Mammary epithelial cell (primary cell): ENCODE measurements at regions of chr3 and their contacts with region 1.

Region 1: DNA sequence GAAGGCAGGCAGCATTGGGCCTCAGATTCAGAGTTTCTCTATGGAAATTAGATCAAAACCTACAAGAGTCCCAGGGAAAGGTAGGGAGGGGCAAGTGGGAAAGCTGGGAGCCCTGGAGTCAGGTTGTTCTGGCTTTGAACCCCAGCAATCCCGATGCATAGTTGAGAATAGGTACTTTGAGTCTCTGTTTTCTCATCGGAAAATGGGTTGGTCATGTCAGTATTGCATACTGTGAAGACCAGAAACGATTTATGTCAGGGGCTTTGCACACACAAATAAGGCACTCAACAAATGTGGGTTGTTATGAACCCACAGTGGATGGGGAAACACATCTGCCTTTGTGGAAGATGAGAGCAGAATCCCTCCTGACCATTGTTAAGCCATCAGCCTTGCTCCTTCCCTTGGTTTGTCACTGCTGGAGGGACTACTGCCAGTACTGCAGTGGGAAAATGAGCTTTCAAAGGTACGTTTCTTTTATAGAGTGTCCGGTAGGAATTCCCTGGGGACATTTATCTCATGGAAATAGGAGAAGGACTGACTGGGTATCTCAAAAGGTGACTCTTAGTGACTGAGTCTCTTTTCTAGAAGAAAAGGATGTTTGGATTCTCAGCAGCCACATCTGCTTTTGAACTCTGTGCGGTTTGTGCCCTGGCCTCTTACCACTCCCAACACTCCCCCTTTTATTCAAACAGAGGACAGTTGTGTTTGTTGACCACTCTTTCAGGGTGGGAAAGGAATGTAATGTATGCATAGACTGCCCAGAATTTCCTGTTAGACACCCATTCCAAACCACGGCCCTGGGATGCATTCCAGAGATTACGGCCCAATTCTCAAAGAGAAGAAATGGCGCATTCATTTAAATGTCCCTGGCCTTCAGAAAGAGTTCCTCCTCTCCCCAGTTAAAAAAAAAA is 54.6 kb upstream of the VILL start:
- DNase-seq: peak; percentile 79
- H3K4me3 ChIP-seq: no peak overlapping the region
- H3K27ac ChIP-seq: peak overlapping the region; percentile 74
- H3K4me1 ChIP-seq: peaks cover 42% of the 10 kb centered on the region
- H3K27me3 ChIP-seq: no peaks in the 10 kb centered on the region
- CTCF ChIP-seq: no peak

Region 2: GRCh38 chr3:37103103-37103808 is 832.8 kb before region 1 on chr3:
- CTCF ChIA-PET with region 1: no interaction called
- dilution Hi-C with region 1: no loop called
- in situ Hi-C with region 1: no loop called
- intact Hi-C with region 1: no loop called
- DNase-seq: no peak
- H3K4me3 ChIP-seq: no peak overlapping the region
- H3K27ac ChIP-seq: no peak overlapping the region
- H3K4me1 ChIP-seq: no peaks in the 10 kb centered on the region
- H3K27me3 ChIP-seq: no peaks in the 10 kb centered on the region
- CTCF ChIP-seq: no peak

Region 3: DNA sequence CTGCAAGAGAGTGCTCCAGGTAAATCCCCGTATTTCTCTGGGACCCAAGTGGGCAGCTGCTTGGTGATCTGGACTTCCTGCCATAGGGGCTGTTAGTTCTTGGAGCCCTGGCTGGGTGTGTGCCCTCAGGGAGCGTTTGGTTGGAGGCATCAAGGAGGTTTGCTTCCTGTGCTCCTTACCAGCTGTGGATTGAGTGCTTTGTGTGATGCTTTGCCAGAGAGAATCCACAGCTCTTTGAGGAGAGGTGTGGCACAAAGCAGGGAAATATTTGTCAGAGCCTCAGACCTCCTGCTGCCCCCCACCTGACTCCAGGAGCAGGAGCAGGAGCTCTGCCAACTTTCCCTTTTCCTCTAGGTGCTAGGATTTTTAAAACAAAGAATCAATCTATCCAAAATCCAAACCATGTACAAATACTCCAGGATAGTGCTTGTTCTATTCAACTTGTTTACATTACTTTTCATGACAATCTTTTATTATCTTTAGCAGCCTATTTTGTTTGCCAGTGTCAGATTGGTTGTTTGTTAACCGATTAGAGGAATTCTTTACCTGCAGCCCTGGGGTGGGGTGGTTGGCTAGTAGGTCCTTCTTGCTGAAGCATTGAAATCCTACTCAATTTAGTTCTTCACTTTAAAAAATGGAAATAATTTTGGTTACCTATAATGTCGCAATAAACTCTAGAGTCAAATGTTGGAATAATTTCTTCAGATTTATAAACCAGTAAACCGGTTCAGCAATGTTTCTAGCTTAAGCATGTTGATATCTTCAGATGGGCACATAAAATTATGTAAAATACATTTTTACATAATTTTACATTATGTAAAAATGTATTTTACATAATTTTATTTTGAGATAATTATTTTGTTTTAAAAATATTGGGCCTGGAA is 71.8 kb before region 1 on chr3:
- CTCF ChIA-PET with region 1: no interaction called
- dilution Hi-C with region 1: no loop called
- in situ Hi-C with region 1: no loop called
- intact Hi-C with region 1: loop called (anchors 2 kb)
- DNase-seq: peak; percentile 40
- H3K4me3 ChIP-seq: peak overlapping the region; percentile 64 to 82 (median 75)
- H3K27ac ChIP-seq: peak overlapping the region; percentile 41
- H3K4me1 ChIP-seq: peaks cover 41% of the 10 kb centered on the region
- H3K27me3 ChIP-seq: no peaks in the 10 kb centered on the region
- CTCF ChIP-seq: no peak

Region 4: DNA sequence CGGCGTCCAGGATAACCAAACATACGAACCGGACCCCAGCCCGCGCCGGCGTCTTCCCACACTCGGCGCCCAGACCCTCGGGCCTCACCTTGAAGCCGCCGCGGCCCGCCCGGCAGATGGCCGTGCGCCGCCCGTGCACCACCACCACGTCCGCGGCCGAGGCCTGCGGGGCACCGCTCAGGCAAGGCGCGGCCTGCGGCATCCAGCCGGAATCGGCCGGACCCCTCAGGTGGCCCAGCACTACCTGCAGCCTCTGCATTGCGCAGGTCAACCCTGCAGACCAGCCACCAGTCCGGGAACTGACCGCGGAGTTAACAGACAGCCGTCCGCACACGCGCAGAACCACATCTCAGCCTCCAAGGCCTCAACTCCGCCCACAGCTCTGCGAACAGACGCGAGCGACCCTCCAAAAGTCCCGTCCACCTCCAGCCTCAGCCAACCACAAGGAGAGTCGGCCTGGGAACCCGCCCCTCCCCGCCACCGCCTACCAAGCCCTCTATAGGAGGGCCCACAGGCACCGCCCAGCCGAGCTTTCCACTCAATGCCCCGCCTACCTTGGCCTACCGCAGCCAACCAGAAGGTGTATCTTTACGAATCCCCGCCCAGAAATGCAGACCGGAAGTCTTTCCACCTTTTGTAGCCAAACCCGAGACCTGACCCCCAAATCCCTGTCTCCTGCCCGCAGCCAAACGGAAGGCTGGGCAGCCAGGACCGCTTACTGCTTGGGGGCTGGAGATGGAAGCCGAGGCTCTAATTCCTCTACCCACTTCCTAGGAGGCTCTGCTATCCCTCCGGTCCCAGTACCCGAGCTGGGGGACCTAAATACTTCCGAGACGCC is 201.0 kb after region 1 on chr3 and contains the start of gene ACAA1:
- CTCF ChIA-PET with region 1: no interaction called
- dilution Hi-C with region 1: no loop called
- in situ Hi-C with region 1: no loop called
- intact Hi-C with region 1: no loop called
- DNase-seq: peak; percentile 99
- H3K4me3 ChIP-seq: peak within 1 kb of the TSS; percentile 55 to 86 (median 84)
- H3K27ac ChIP-seq: peak within 1 kb of the TSS; percentile 71
- H3K4me1 ChIP-seq: peaks cover 47% of the 10 kb centered on the region
- H3K27me3 ChIP-seq: no peaks in the 10 kb centered on the region
- CTCF ChIP-seq: peak in 1 of 2 donors; percentile 1
- total RNA-seq, gene ACAA1: 24.8 to 62.4 TPM